ENCODE measurements at regions of chr16 and their contacts with region 1.

Region 1: GRCh38 chr16:10385725-10386516 is at the start of gene ATF7IP2:
- DNase-seq: peak; percentile 91 to 95
- ATAC-seq: peak; percentile 97 to 100 (median 99)
- H3K4me3 ChIP-seq: peak within 1 kb of the TSS; percentile 49 to 82 (median 76)
- H3K27ac ChIP-seq: peak within 1 kb of the TSS; percentile 11 to 92 (median 86)
- H3K4me1 ChIP-seq: peaks cover 0 to 29% (median 12%) of the 10 kb centered on the region in 9 donors
- H3K27me3 ChIP-seq: no peaks in the 10 kb centered on the region
- CTCF ChIP-seq: no peak
- total RNA-seq, gene ATF7IP2: 19.4 to 62.6 (median 35.8) TPM

Region 2: DNA sequence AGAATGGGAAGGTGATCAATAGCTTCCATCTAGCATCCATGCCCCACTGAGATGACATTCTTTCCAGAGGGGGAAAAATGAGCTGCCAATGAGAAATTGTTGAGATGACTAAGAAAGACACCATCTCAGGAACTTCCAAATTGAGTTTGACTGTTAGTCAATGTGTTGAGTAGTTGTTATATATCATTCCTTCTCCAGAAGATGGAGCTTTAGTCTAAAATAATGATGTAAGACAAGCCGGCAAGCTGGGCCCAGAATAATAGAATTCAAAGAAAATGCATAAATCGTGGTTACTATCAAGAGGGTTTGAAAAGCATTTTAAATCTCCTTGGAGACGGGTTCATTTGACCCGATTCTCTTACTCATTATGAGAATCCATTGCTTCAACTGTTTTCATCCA is 71.1 kb before region 1 on chr16:
- intact Hi-C with region 1: no loop called
- DNase-seq: no peak
- ATAC-seq: peak in 2 of 8 donors; percentile 39 to 55
- H3K4me3 ChIP-seq: no peak overlapping the region
- H3K27ac ChIP-seq: no peak overlapping the region
- H3K4me1 ChIP-seq: no peaks in the 10 kb centered on the region
- H3K27me3 ChIP-seq: no peaks in the 10 kb centered on the region
- CTCF ChIP-seq: peak in 6 of 9 donors; percentile 32 to 59 (median 52)

Region 3: DNA sequence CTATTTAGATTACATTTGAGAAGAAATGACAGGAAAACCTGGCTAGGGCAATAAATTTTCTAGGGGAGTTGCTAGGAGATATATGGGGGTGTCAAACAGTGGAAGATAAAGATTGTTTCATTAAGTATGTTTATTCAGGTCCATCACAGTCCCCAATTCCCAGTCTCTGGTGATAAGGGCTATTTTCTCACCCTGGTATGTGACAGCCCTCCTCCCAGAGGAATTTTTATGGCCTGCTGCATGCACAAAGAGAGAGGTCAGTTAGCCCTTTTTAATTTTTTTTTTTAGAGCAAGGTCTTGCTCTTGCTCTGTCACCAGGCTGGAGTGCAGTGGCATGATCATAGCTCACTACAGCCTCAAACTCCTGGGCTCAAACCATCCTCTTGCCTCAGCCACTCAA is 53.7 kb before region 1 on chr16:
- intact Hi-C with region 1: loop called in 2 of 10 experiments (anchors 5 to 10 kb)
- DNase-seq: peak in 1 of 2 donors; percentile 9
- ATAC-seq: peak in 6 of 8 donors; percentile 20 to 86 (median 78)
- H3K4me3 ChIP-seq: no peak overlapping the region
- H3K27ac ChIP-seq: peak overlapping the region in 7 of 10 donors; percentile 31 to 80 (median 74)
- H3K4me1 ChIP-seq: peaks cover 0 to 23% (median 0%) of the 10 kb centered on the region in 9 donors
- H3K27me3 ChIP-seq: no peaks in the 10 kb centered on the region
- CTCF ChIP-seq: no peak

Region 4: DNA sequence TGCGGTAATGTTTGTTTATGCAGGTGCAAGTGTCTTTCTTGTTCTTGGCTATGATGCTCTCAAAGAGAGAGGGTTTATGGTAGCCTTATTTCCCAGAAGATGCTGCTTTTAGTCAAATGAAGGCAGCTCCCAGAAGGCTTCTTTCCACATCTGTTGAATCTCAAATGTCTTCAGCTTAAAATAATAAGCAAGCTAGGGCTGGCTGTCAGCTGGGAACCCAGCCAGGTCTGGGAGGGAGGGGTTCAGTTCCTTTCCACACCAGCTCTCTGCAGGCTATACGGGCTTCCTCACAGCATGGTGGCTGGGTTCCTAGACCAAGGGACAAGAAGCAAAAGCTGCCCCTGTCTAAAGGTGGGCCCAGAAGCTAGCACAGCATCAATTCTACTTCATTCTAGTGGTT is 47.5 kb before region 1 on chr16:
- intact Hi-C with region 1: loop called in 2 of 10 experiments (anchors 5 to 10 kb)
- DNase-seq: peak; percentile 15 to 16
- ATAC-seq: peak in 1 of 8 donors; percentile 46
- H3K4me3 ChIP-seq: no peak overlapping the region
- H3K27ac ChIP-seq: no peak overlapping the region
- H3K4me1 ChIP-seq: peaks cover 0 to 11% (median 0%) of the 10 kb centered on the region in 9 donors
- H3K27me3 ChIP-seq: no peaks in the 10 kb centered on the region
- CTCF ChIP-seq: no peak

Region 5: DNA sequence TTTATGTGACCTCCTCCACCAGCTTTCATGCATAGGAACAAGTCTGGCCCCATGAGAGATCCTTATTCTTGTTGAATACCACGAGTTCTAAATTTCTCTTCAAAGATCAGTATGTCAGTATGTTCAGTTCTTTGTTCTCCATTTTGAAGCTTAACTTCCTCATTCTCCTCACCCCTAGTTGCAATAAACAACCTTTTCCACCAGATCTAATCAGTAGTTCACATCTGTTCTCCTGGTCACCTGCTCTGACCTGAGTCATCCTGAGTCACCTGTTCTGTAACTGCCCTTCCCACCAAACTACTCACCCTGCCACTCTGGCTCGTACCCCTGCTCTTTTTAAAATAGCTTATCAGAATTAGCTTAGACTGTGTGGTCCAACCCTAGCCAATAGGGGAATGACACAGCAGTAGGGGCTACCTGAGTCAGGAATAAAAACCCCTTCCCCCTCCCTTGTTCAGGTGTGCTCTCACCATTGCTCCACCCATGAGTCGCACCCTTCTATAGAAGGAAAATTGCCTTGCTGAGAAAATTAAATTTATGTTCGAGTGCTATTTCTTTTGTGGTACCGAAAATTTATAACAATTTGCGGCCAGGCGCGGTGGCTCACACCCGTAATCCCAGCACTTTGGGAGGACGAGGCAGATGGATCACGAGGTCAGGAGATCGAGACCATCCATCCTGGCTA is 99.9 kb after region 1 on chr16:
- intact Hi-C with region 1: loop called in 1 of 10 experiments (anchors 10 kb)
- DNase-seq: no peak
- ATAC-seq: no peak
- H3K4me3 ChIP-seq: no peak overlapping the region
- H3K27ac ChIP-seq: no peak overlapping the region
- H3K4me1 ChIP-seq: peaks cover 0 to 5% (median 0%) of the 10 kb centered on the region in 9 donors
- H3K27me3 ChIP-seq: no peaks in the 10 kb centered on the region
- CTCF ChIP-seq: no peak

Region 6: DNA sequence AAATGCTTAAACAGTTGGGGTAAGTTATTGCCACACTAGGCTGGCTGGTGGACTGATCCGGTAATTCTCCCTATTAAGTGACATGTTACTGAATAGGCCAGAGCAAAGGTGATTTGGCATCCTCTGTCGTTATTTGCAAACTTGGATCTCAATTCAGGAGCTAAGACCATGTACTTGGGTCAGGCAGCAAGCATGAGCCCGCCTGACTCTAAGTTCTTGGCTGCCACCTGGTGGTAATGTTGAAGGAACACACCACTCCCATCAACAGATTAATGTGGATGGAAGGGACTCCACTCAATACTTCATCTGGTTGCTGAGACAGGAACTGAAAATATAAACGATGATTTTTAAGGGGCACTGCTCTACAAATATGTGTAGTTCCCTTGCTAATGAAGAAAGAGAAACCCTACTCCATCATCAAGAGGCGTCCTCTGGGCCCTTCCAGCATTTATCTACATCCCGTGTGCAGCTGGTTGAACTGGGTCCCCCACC is 123.7 kb after region 1 on chr16:
- intact Hi-C with region 1: loop called in 1 of 10 experiments (anchors 10 kb)
- DNase-seq: peak in 1 of 2 donors; percentile 77
- ATAC-seq: peak; percentile 82 to 93 (median 88)
- H3K4me3 ChIP-seq: no peak overlapping the region
- H3K27ac ChIP-seq: no peak overlapping the region
- H3K4me1 ChIP-seq: peaks cover 0 to 9% (median 8%) of the 10 kb centered on the region in 9 donors
- H3K27me3 ChIP-seq: no peaks in the 10 kb centered on the region
- CTCF ChIP-seq: peak; percentile 74 to 89 (median 80)

Measured in heart right ventricle (tissue), 16 donors.